Endothelial cell of umbilical vein (primary cell): ENCODE measurements at regions of chr16 and their contacts with region 1.

Region 1: DNA sequence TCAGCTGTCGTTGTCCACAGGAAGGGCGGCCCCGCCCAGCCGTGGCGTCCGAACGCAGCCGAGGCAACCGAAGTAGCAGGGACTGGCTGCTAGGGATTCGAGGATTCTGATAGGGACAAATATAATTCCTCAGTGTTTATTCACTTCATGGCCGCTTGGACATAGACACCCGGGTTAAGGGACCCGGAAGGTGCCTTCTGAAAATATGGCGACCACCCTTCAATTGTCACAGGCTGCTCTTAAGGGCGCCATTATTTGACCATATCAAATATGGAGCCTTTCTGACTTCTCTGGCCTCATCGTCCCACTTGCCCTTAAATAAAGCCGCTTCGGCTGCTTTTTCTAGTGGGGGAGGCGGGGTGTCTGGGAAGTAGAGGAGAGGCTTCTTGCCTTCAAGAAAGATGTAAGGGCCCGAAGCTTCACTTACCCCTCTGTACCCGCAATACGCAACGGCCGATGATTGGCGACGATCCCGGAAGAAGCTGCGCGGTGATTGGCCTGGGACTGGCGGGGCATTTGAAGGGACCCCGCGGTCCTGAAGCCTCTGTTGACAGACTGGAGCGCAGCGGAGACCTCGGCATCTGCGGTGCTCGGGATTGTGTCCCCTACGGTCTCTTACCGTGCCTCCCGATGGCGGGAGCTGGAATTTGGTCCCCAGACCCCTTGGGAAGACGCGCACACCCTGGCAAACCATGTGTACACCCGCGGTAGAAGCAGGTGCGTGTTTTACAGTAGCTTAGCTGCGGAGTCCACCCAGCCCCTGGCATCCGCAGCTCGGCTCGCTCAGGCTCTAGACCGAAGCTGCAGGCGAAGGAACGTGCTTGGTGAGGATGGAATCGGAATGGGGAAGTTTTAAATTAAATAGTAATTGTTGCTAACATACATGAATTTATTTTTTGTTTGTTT is at the start of gene ZNF688:
- DNase-seq: peak; percentile 97
- H3K4me3 ChIP-seq: peak within 1 kb of the TSS; percentile 31 to 77 (median 76)
- H3K27ac ChIP-seq: peak within 1 kb of the TSS; percentile 78
- H3K4me1 ChIP-seq: peaks cover 16% of the 10 kb centered on the region
- H3K27me3 ChIP-seq: no peaks in the 10 kb centered on the region
- CTCF ChIP-seq: no peak
- POLR2A ChIP-seq: peak; percentile 86
- total RNA-seq, gene ZNF688: 10.5 and 10.9 TPM in 2 replicates

Region 2: DNA sequence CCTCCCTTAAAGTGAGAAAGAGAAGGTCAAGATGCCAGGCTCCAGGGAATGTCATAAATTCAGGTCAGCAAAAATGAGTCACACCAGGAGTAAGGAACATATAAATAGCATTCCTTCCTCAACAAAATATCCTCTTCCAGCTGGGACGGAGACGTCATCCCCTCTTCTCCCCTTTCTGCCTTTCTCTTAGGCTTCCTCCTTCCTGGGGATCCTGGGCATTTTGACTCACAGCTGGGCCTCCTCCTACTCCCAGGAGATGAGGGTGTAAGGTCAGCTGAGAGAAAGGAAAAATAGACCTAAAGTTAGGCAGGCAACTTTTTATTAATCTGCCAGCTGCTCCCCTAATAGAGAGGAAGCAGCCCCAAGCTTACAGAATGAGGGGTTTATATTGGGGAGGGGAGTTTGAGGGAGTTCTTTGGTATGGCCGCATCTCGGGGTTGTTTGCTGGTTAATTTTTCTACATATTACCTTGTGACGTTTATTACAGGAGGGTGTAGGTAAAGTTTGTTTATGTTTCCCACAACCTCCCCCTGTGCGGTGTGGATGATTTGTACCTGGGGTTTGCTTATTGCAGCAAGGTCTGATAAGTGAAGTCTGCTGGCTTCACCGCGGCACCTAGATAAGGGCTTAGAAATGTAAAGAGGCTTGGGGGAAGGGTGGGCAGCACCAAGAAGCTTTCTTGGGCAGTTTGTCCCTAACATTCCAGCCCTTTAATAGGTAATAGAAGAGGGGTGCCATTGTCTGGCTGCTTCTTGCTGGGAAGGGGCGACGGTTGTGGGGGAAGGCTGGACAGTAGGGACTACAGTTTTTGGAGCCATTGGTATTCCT is 30.2 kb before region 1 on chr16:
- CTCF ChIA-PET with region 1: no interaction called
- POLR2A ChIA-PET with region 1: no interaction called
- dilution Hi-C with region 1: no loop called
- intact Hi-C with region 1: no loop called
- DNase-seq: peak; percentile 59
- H3K4me3 ChIP-seq: no peak overlapping the region
- H3K27ac ChIP-seq: peak overlapping the region; percentile 29
- H3K4me1 ChIP-seq: peaks cover 12% of the 10 kb centered on the region
- H3K27me3 ChIP-seq: no peaks in the 10 kb centered on the region
- CTCF ChIP-seq: no peak
- POLR2A ChIP-seq: no peak

Region 3: GRCh38 chr16:30609926-30610839 is 38.2 kb after region 1 on chr16 and contains the start of gene ZNF689:
- CTCF ChIA-PET with region 1: interaction called, 4 read pairs
- POLR2A ChIA-PET with region 1: no interaction called
- dilution Hi-C with region 1: no loop called
- intact Hi-C with region 1: loop called (anchors 1 kb)
- DNase-seq: peak; percentile 98
- H3K4me3 ChIP-seq: peak within 1 kb of the TSS; percentile 29 to 77 (median 70)
- H3K27ac ChIP-seq: peak within 1 kb of the TSS; percentile 79
- H3K4me1 ChIP-seq: peaks cover 4% of the 10 kb centered on the region
- H3K27me3 ChIP-seq: no peaks in the 10 kb centered on the region
- CTCF ChIP-seq: no peak
- POLR2A ChIP-seq: peak; percentile 74
- total RNA-seq, gene ZNF689: 6.8 and 8.4 TPM in 2 replicates

Region 4: GRCh38 chr16:30700491-30700890 is 128.5 kb after region 1 on chr16:
- CTCF ChIA-PET with region 1: no interaction called
- POLR2A ChIA-PET with region 1: no interaction called
- dilution Hi-C with region 1: no loop called
- intact Hi-C with region 1: no loop called
- DNase-seq: no peak
- H3K4me3 ChIP-seq: no peak overlapping the region
- H3K27ac ChIP-seq: no peak overlapping the region
- H3K4me1 ChIP-seq: peaks cover 21% of the 10 kb centered on the region
- H3K27me3 ChIP-seq: no peaks in the 10 kb centered on the region
- CTCF ChIP-seq: no peak
- POLR2A ChIP-seq: no peak